Motor neuron (in vitro differentiated cells): ENCODE measurements at regions of chr14 and their contacts with region 1.

Region 1: DNA sequence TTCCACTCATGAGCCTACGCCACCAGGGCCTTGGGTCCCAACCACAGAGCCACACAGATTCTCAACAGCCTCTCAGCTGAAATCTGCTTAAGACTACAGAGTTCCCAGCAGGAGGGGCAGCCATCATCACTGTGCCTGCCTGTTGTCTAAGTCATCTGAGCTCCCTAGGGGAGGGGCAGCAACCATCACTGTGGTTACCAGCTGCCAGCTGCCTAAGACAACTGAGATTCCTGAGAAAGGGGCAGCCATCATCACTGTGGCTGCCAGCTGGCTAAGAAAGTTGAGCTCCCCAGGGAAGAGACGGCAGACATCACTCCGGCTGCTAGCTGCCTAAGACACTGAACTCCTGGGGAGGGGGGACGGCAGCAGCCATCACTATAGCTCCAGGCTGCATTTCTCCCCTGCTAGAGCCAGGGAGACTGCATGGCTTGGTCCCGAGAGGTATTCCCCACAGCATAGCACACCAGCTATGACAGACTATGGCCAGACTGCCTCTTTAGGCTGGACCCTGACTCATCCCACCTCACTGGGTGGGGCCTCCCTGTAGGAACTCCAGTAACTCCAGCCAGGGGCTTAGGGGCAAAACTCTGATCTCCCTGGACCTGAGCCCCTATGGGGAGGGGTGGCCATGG is 37.2 kb upstream of the C14orf132 start:
- ATAC-seq: peak; percentile 43 to 97 (median 88)
- H3K4me3 ChIP-seq: no peak overlapping the region
- H3K27ac ChIP-seq: no peak overlapping the region
- H3K4me1 ChIP-seq: peaks cover 3 to 9% of the 10 kb centered on the region in 2 donors

Region 2: GRCh38 chr14:96268431-96269358 is 266.7 kb after region 1 on chr14:
- in situ Hi-C with region 1: loop called in 6 of 9 experiments (anchors 10 to 25 kb)
- ATAC-seq: peak; percentile 59 to 92 (median 76)
- H3K4me3 ChIP-seq: no peak overlapping the region
- H3K27ac ChIP-seq: no peak overlapping the region
- H3K4me1 ChIP-seq: no peaks in the 10 kb centered on the region